A673 (cell line): ENCODE measurements at regions of chr2 and their contacts with region 1.

Region 1: GRCh38 chr2:1854729-1855547 is 110.6 kb upstream of the PXDN start:
- DNase-seq: peak; percentile 89
- H3K4me3 ChIP-seq: peak overlapping the region; percentile 41
- H3K27ac ChIP-seq: peak overlapping the region; percentile 100
- H3K4me1 ChIP-seq: peaks cover 71% of the 10 kb centered on the region
- H3K27me3 ChIP-seq: no peaks in the 10 kb centered on the region
- CTCF ChIP-seq: peak; percentile 80

Region 2: GRCh38 chr2:1972422-1972821 is 117.5 kb after region 1 on chr2:
- CTCF ChIA-PET with region 1: no interaction called
- POLR2A ChIA-PET with region 1: no interaction called
- intact Hi-C with region 1: loop called (anchors 5 kb)
- DNase-seq: peak; percentile 98
- H3K4me3 ChIP-seq: no peak overlapping the region
- H3K27ac ChIP-seq: peak overlapping the region; percentile 35
- H3K4me1 ChIP-seq: peaks cover 41% of the 10 kb centered on the region
- H3K27me3 ChIP-seq: no peaks in the 10 kb centered on the region
- CTCF ChIP-seq: no peak

Region 3: DNA sequence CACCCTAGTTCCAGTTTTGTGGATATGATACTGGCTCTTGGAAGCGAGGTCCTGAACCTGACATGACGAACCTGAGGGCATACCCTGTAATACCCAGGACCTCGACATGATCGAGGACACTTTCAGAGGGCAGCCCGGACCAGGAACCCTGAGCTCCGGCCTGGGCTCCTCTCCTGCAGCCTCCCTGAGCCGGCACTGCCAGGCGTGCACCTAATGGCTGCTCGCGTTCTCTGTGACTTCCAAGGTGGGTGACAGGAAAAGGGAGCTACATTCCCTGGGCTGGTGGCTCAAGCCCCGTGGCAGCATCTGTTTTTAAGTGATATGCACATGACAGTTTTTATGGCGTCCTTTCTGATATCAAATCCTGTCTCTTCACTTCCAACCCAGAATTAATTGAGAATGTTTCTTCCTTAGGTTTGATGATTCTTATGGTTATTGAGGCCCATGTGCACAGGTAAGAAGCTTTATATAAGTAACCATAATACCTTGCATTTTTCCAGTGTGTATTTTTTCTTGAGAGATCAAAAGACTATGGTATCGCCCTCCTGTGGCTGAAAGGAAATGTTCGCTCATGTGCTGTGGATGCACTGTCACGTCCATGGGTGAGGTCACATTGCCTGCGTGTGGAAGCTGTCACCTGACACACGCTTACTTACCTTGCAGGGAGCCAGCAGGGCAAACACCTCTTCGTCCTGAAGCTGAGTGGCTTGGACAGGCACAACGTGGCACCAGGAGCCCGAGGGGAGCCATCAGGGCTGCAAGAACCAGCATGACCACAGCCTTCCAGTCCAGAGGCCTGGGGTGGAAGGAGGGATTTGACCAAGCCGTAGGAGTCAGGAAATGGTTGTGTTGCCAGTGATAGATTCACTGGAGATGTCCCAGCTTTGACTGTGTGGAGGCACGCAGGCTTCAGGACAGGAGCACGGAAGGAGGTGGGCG is 843.5 kb after region 1 on chr2:
- CTCF ChIA-PET with region 1: no interaction called
- POLR2A ChIA-PET with region 1: no interaction called
- intact Hi-C with region 1: loop called (anchors 10 kb)
- DNase-seq: peak; percentile 31
- H3K4me3 ChIP-seq: no peak overlapping the region
- H3K27ac ChIP-seq: no peak overlapping the region
- H3K4me1 ChIP-seq: no peaks in the 10 kb centered on the region
- H3K27me3 ChIP-seq: peaks cover 34% of the 10 kb centered on the region
- CTCF ChIP-seq: peak; percentile 60

Region 4: DNA sequence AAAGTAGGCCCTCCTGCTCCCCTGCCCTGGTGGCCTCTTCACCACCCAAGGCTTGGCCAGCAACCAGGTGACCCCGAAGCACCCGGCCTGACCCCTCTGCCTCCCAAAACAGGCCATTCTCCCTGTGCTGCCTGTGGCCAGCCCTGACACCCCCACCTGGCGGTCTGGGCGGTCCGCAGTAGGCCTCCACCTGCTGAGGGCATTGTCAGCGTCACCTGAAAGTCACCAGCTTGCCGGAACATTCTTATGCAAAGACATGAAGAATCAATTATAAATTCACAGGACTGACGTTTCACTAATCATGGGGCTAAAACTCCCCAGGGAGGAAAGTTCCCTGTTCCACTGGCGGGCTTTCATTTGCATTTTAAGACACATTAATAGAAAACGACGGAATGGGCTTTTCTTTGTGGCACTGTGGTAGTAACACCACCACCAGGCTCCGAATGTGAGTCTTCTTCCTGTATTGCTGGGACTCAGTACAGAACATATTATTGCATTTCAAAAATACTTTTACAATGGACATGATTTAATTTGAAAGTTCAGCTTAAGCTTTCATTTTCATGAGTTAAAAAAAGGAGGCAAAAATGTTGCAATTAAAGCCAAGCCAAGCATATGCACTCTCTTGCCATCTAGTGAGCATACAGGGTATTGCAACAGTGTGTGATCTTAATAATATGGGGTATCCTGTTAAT is 1607.0 kb after region 1 on chr2:
- CTCF ChIA-PET with region 1: no interaction called
- POLR2A ChIA-PET with region 1: no interaction called
- intact Hi-C with region 1: loop called (anchors 10 kb)
- DNase-seq: peak; percentile 72
- H3K4me3 ChIP-seq: no peak overlapping the region
- H3K27ac ChIP-seq: peak overlapping the region; percentile 53
- H3K4me1 ChIP-seq: peaks cover 12% of the 10 kb centered on the region
- H3K27me3 ChIP-seq: no peaks in the 10 kb centered on the region
- CTCF ChIP-seq: peak; percentile 85